Activated CD4-positive, alpha-beta T cell treated with anti-CD3 and anti-CD28 coated beads, Interleukin-2, amount 10 ng/mL, durations not matched to agents 7 days and 5 days (primary cell): ENCODE measurements at regions of chr19 and their contacts with region 1.

Region 1: GRCh38 chr19:13588957-13589833 is 82.9 kb upstream of the CACNA1A start:
- DNase-seq: peak; percentile 82
- H3K4me3 Mint-ChIP-seq: no peak overlapping the region
- H3K27ac Mint-ChIP-seq: no peak overlapping the region
- H3K4me1 Mint-ChIP-seq: peaks cover 2% of the 10 kb centered on the region
- H3K27me3 Mint-ChIP-seq: no peaks in the 10 kb centered on the region

Region 2: GRCh38 chr19:13277104-13277809 is 311.9 kb before region 1 on chr19:
- CTCF ChIA-PET with region 1: interaction called, 14 read pairs
- POLR2A ChIA-PET with region 1: no interaction called
- DNase-seq: peak; percentile 85
- H3K4me3 Mint-ChIP-seq: peak overlapping the region; percentile 55
- H3K27ac Mint-ChIP-seq: peak overlapping the region; percentile 95
- H3K4me1 Mint-ChIP-seq: peaks cover 25% of the 10 kb centered on the region
- H3K27me3 Mint-ChIP-seq: peaks cover 5% of the 10 kb centered on the region

Region 3: GRCh38 chr19:13574933-13575332 is 14.3 kb before region 1 on chr19:
- CTCF ChIA-PET with region 1: interaction called, 16 read pairs
- POLR2A ChIA-PET with region 1: no interaction called
- DNase-seq: no peak
- H3K4me3 Mint-ChIP-seq: no peak overlapping the region
- H3K27ac Mint-ChIP-seq: no peak overlapping the region
- H3K4me1 Mint-ChIP-seq: no peaks in the 10 kb centered on the region
- H3K27me3 Mint-ChIP-seq: peaks cover 3% of the 10 kb centered on the region